Gastrocnemius medialis (tissue), 4 donors: ENCODE measurements at regions of chr1 and their contacts with region 1.

Region 1: DNA sequence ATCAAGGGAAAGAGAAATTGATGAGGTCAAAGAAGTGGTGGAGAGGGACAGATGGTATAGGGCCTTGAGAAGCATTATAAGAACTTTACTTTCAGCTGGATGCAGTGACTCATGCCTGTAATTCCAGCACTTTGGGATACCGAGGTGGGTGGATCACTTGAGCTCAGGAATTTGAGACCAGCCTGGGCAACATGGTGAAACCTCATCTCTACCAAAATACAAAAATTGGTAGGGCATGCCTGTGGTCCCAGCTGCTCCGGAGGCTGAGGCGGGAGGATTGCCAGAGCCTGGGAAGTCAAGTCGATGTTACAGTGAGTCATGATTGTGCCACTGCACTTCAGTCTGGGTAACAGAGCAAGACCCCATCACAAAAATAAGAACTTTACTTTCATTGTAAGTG is 5.7 kb downstream of the TMEM50A start:
- DNase-seq: peak in 1 of 2 donors; percentile 26
- ATAC-seq: peak in 1 of 2 donors; percentile 41
- H3K4me3 ChIP-seq: no peak overlapping the region
- H3K27ac ChIP-seq: peak overlapping the region in 1 of 4 donors; percentile 17
- H3K4me1 ChIP-seq: peaks cover 17 to 20% of the 10 kb centered on the region in 2 donors
- H3K27me3 ChIP-seq: no peaks in the 10 kb centered on the region
- CTCF ChIP-seq: no peak
- POLR2A ChIP-seq: no peak

Region 2: GRCh38 chr1:25239681-25240541 is 104.0 kb before region 1 on chr1:
- in situ Hi-C with region 1: loop called in 2 of 4 experiments (anchors 5 to 10 kb)
- intact Hi-C with region 1: no loop called
- DNase-seq: peak; percentile 86 to 95
- ATAC-seq: peak; percentile 89 to 91
- H3K4me3 ChIP-seq: peak overlapping the region; percentile 48 to 59 (median 52)
- H3K27ac ChIP-seq: peak overlapping the region; percentile 88 to 97 (median 92)
- H3K4me1 ChIP-seq: peaks cover 41 to 56% of the 10 kb centered on the region in 2 donors
- H3K27me3 ChIP-seq: no peaks in the 10 kb centered on the region
- CTCF ChIP-seq: peak in 4 of 5 experiments; percentile 73 to 79 (median 76)
- POLR2A ChIP-seq: peak; percentile 32 to 37

Region 3: DNA sequence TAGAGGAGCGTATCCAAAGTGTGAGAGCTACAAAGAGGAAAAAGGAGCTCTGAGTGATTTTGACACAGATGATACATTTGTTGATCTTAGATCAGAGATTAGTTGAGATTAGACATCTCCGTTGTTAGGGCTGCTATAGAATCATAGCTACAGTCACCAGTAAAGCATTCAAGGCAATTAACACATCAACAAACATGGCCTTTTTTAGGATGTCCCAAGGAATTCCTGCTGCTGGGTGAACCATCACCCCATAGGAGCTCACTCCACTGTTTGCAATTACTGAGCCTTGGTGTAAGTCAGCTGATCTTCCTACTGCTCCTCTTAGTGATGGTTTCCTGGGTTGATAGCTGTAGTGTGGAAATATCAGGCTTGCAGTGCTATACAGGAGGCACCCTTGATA is 90.0 kb before region 1 on chr1:
- in situ Hi-C with region 1: loop called in 2 of 4 experiments (anchors 10 kb)
- intact Hi-C with region 1: no loop called
- DNase-seq: no peak
- ATAC-seq: no peak
- H3K4me3 ChIP-seq: no peak overlapping the region
- H3K27ac ChIP-seq: no peak overlapping the region
- H3K4me1 ChIP-seq: peaks cover 0 to 9% of the 10 kb centered on the region in 2 donors
- H3K27me3 ChIP-seq: no peaks in the 10 kb centered on the region
- CTCF ChIP-seq: no peak
- POLR2A ChIP-seq: no peak

Region 4: GRCh38 chr1:25484096-25484495 is 140.2 kb after region 1 on chr1:
- in situ Hi-C with region 1: no loop called
- intact Hi-C with region 1: no loop called
- DNase-seq: peak; percentile 46 to 84
- ATAC-seq: peak; percentile 69 to 84
- H3K4me3 ChIP-seq: no peak overlapping the region
- H3K27ac ChIP-seq: peak overlapping the region; percentile 12 to 83 (median 50)
- H3K4me1 ChIP-seq: peaks cover 43 to 52% of the 10 kb centered on the region in 2 donors
- H3K27me3 ChIP-seq: no peaks in the 10 kb centered on the region
- CTCF ChIP-seq: no peak
- POLR2A ChIP-seq: no peak